ENCODE measurements at regions of chr14 and their contacts with region 1.

Region 1: DNA sequence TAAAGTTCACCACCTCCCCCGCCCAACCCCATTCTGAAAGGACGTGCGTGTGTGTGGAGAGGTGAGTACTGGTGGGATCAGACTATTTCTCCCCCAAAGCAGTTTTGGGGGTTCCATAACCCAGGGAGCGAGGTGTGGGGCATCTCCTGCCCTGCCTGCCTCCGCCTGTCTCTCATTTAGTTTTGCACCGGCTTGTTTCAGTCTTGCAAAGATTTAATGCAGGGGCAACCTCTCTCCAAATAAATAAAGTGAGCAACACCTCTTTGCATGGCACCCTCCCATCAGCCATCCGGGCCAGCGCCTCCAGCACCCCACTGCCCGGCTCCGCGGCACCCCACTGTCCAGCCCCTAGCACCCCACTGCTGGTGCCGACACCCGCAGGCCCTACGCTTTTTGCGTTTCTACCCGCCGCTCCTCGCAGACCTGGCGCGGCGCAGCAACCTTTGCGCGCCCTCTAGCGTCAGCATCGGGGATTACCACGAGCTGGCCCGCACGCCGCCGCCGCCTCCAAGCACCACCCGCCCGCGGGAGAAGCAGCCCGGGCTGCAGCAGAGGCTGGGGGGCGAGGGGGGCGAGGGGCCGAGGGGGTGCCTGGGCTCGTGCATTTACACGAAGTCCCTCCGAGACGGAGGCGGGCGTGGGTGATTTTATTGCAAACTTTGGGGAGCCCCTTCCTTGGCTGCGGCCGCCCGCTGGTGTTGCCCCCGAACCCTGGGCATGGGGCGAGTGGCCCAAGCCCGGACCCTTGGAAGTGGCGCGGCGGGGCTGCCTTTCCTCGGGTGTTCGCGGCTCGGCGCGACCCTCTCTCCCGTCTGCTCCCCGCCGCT is 55.8 kb upstream of the VRK1 start:
- DNase-seq: no peak
- ATAC-seq: peak; percentile 85
- H3K4me3 ChIP-seq: peak overlapping the region; percentile 43 to 62 (median 56); a peak in 5 of 6 replicates
- H3K27ac ChIP-seq: no peak overlapping the region
- H3K4me1 ChIP-seq: peaks cover 5% of the 10 kb centered on the region; the same call in 1 of the 2 replicates
- H3K27me3 ChIP-seq: peaks cover 2 to 85% of the 10 kb centered on the region in 2 experiments
- CTCF ChIP-seq: peak; percentile 95
- EP300 ChIP-seq: no peak
- POLR2A ChIP-seq: no peak
- RAD21 ChIP-seq: peak; percentile 86

Region 2: DNA sequence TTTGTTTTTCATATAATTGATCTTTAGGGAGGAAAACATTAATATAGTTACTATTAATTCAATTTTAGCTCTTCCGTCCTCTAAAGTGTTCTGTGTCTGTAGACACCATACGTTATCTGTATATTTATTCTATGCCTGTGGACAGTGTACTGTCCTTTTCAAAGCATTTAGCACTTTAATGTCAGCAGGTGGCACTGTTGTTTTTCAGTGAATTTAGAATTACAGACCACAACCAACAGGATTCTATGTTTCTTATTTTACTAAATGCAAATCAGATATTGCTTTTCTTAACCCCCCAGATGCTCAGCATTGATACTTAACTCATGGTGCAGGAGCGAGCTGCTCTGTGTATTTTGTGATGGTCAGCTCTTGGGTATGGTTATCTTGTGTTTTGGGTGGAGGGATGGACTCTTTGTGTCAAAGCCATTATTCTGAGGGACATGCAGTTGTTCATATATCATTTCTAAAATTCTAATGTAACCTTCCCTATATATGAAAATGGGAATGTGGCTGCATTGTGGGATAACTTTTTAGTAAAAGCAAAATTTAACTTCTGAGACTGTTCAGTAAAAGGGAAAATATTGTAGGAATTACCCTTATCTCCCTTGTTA is 174.0 kb before region 1 on chr14:
- CTCF ChIA-PET with region 1: no interaction called
- POLR2A ChIA-PET with region 1: no interaction called
- in situ Hi-C with region 1: no loop called
- intact Hi-C with region 1: loop called (anchors 5 kb)
- DNase-seq: peak; percentile 21
- ATAC-seq: peak; percentile 88
- H3K4me3 ChIP-seq: no peak overlapping the region
- H3K27ac ChIP-seq: no peak overlapping the region
- H3K4me1 ChIP-seq: no peaks in the 10 kb centered on the region
- H3K27me3 ChIP-seq: no peaks in the 10 kb centered on the region
- CTCF ChIP-seq: peak; percentile 61
- EP300 ChIP-seq: no peak
- POLR2A ChIP-seq: no peak
- RAD21 ChIP-seq: no peak

Region 3: GRCh38 chr14:96584199-96584906 is 157.0 kb before region 1 on chr14:
- CTCF ChIA-PET with region 1: interaction called, 15 read pairs
- POLR2A ChIA-PET with region 1: no interaction called
- in situ Hi-C with region 1: loop called (anchors 5 kb)
- intact Hi-C with region 1: loop called (anchors 1 kb)
- DNase-seq: peak; percentile 65
- ATAC-seq: peak; percentile 95
- H3K4me3 ChIP-seq: no peak overlapping the region
- H3K27ac ChIP-seq: no peak overlapping the region
- H3K4me1 ChIP-seq: 0 out of 2 replicates have a peak, but pooled peaks cover 4% of the 10 kb centered on the region
- H3K27me3 ChIP-seq: peaks cover 0 to 10% of the 10 kb centered on the region in 2 experiments; a peak in 3 of 5 replicates
- CTCF ChIP-seq: peak; percentile 93
- EP300 ChIP-seq: no peak
- POLR2A ChIP-seq: no peak
- RAD21 ChIP-seq: peak; percentile 99

Region 4: DNA sequence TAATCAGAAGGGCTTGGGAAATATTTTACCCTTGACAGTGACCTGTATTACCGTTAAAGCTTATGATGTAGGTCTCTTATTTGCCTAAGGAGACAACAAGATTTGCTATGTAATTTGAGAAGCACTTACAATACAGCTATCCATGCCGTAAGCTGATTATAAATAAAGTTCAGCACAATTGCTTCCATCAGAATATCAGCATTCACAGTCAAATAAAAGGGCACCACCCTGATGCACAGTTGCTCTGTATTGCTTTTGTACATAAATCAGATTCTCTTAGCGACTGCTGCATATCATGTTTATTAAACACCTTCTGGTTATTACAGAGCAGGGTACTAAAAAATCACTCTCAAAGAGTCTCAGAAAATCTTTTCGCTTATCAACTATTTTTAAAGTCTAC is 11.5 kb before region 1 on chr14:
- CTCF ChIA-PET with region 1: interaction called, 3 read pairs
- POLR2A ChIA-PET with region 1: no interaction called
- in situ Hi-C with region 1: no loop called
- intact Hi-C with region 1: loop called (anchors 1 kb)
- DNase-seq: no peak
- ATAC-seq: no peak
- H3K4me3 ChIP-seq: no peak overlapping the region
- H3K27ac ChIP-seq: no peak overlapping the region
- H3K4me1 ChIP-seq: peaks cover 4% of the 10 kb centered on the region; the same call in 1 of the 2 replicates
- H3K27me3 ChIP-seq: peaks cover 2 to 34% of the 10 kb centered on the region in 2 experiments; a peak in 3 of 5 replicates
- CTCF ChIP-seq: no peak
- EP300 ChIP-seq: no peak
- POLR2A ChIP-seq: no peak
- RAD21 ChIP-seq: no peak

Region 5: GRCh38 chr14:96847297-96847850 is 106.0 kb after region 1 on chr14:
- CTCF ChIA-PET with region 1: no interaction called
- POLR2A ChIA-PET with region 1: no interaction called
- in situ Hi-C with region 1: no loop called
- intact Hi-C with region 1: loop called (anchors 5 kb)
- DNase-seq: no peak
- ATAC-seq: no peak
- H3K4me3 ChIP-seq: no peak overlapping the region
- H3K27ac ChIP-seq: no peak overlapping the region
- H3K4me1 ChIP-seq: peaks cover 8% of the 10 kb centered on the region; the same call in 1 of the 2 replicates
- H3K27me3 ChIP-seq: no peaks in the 10 kb centered on the region
- CTCF ChIP-seq: no peak
- EP300 ChIP-seq: no peak
- POLR2A ChIP-seq: no peak
- RAD21 ChIP-seq: no peak